Activated CD8-positive, alpha-beta memory T cell treated with anti-CD3 and anti-CD28 coated beads, Interleukin-2, amount 10 ng/mL, durations not matched to agents 7 days and 5 days (primary cell): ENCODE measurements at regions of chr1 and their contacts with region 1.

Region 1: DNA sequence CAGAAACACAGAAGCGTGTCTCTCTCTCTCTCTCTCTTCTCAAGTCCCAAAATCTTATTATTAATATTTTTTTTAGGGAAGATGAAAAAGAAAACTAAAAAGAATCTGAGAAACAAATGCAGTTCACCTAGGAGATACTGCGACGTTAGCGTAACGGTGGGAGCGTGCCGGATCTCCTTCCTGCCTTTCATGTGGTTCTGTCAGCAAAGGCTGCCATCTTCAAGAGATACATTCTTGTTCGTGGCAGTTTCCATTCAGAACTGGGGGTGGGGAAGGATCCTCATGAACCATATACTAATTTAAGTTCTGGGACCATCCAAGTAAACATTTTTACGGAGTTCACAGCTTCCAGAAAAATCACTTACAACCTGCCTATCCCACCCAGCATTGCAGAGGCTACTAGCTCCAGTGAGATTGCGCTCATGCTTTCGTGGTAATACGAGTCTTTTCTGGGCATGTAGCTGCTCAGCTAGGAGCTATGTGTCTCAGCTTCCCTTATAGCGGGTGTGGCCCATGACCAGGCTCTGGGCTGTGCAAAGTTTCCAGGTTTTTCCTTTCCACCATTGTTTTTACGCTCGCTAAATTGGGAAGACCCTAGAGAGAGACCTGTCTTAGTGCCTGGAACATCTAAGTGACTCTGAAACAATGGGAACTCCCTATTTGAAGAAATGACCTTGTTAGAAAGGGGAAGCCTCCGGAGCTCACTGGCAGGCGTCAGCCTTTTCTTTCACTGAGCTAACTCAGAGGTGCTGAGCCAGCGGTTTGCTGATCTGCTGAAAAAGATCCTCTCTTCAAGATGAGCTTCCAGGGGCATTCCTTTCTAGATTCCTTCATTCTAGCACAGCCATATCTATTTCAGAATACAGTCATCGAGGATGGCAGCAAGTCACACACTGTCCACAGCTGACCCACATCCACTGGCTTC is 17.3 kb downstream of the SLAMF1 start:
- DNase-seq: peak; percentile 83
- ATAC-seq: peak; percentile 42
- H3K4me3 Mint-ChIP-seq: peak overlapping the region; percentile 46
- H3K27ac Mint-ChIP-seq: peak overlapping the region; percentile 97
- H3K4me1 Mint-ChIP-seq: peaks cover 97% of the 10 kb centered on the region
- H3K27me3 Mint-ChIP-seq: no peaks in the 10 kb centered on the region

Region 2: DNA sequence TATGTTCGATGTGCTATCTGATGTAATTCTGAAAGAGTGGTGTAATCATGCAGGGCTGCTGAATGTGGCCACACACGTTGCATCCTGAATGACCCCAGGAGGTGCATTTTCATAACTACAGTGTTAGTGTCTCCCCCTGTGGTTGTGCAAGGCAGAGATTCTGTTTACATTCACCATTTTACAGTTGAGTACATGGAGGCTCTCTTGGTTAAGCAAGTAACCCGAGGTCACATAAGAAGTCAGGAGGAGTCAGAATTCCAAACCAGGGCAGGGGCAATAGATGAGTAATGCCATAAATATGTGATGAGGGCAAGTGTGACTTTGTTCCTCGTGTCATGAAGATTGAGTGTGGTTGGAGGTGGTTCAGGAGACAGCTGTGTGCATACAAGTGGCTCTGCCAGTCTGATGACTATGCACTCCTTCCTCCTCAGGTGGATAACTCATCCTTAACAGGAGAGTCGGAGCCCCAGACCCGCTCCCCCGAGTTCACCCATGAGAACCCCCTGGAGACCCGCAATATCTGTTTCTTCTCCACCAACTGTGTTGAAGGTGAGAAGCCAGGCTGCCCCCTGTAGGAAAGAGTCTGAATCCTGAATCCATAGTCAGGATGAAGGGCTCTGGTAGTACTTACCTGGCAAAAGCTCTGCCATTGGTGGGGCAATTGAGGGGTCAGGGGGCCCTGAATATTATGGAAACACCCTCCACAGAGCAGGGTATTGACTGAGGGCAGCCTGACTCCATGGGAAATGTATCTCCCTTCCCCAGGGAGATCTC is 504.7 kb before region 1 on chr1:
- CTCF ChIA-PET with region 1: no interaction called
- DNase-seq: no peak
- ATAC-seq: no peak
- H3K4me3 Mint-ChIP-seq: no peak overlapping the region
- H3K27ac Mint-ChIP-seq: no peak overlapping the region
- H3K4me1 Mint-ChIP-seq: no peaks in the 10 kb centered on the region
- H3K27me3 Mint-ChIP-seq: peaks cover 6% of the 10 kb centered on the region

Region 3: GRCh38 chr1:160590488-160590887 is 39.1 kb before region 1 on chr1:
- CTCF ChIA-PET with region 1: no interaction called
- DNase-seq: no peak
- ATAC-seq: no peak
- H3K4me3 Mint-ChIP-seq: no peak overlapping the region
- H3K27ac Mint-ChIP-seq: no peak overlapping the region
- H3K4me1 Mint-ChIP-seq: peaks cover 8% of the 10 kb centered on the region
- H3K27me3 Mint-ChIP-seq: no peaks in the 10 kb centered on the region

Region 4: DNA sequence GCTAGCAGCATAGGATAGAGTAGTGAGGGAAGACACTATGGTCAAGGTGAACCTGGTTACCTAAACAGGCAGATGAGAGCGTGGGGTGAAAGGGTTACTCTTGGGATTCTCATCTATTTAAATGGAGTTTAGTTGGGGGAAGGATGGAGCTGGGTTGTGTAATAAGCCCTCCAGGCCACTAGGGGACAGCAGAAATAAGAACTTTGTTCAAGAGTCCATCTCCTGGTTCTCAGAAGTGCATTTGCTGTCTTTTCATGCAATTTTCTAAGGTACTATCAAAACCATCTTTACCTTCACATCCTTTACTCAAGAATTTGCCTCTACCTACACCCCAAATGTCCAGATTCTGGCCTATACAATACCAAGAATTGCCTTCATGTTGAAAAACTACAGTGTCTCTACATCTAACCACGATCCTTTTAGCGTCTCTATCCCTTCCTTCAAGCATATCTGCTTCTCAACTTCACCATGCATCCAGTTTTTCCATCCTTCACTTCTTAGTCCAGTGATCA is 10.7 kb before region 1 on chr1:
- CTCF ChIA-PET with region 1: interaction called, 13 read pairs
- DNase-seq: peak; percentile 68
- ATAC-seq: no peak
- H3K4me3 Mint-ChIP-seq: no peak overlapping the region
- H3K27ac Mint-ChIP-seq: peak overlapping the region; percentile 66
- H3K4me1 Mint-ChIP-seq: peaks cover 71% of the 10 kb centered on the region
- H3K27me3 Mint-ChIP-seq: no peaks in the 10 kb centered on the region

Region 5: DNA sequence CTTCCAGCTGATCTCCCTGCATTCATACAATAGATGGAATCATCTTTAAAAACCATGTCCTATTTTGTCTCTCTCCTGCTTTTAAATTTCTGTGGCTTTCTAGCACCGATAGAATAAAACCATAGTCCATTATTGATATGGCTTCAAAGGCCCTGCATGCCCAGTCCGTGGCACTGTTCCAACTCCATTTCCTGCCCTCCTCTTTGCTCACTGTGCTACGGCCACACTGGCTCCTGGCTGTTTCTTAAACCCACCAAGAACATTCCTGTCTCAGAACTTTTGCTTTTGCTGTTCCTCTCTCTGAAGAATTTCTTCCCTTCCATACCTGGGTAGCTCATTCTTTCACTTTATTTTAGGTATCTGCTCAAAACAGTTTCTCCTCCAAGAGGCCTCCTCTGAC is 10.1 kb after region 1 on chr1:
- CTCF ChIA-PET with region 1: interaction called, 12 read pairs
- DNase-seq: no peak
- ATAC-seq: no peak
- H3K4me3 Mint-ChIP-seq: peak overlapping the region; percentile 67
- H3K27ac Mint-ChIP-seq: peak overlapping the region; percentile 95
- H3K4me1 Mint-ChIP-seq: peaks cover 89% of the 10 kb centered on the region
- H3K27me3 Mint-ChIP-seq: no peaks in the 10 kb centered on the region

Region 6: GRCh38 chr1:160646711-160647328 is 17.3 kb after region 1 on chr1 and contains the start of gene SLAMF1:
- CTCF ChIA-PET with region 1: interaction called, 10 read pairs
- DNase-seq: peak; percentile 60
- ATAC-seq: peak; percentile 63
- H3K4me3 Mint-ChIP-seq: peak within 1 kb of the TSS; percentile 97
- H3K27ac Mint-ChIP-seq: peak within 1 kb of the TSS; percentile 92
- H3K4me1 Mint-ChIP-seq: peaks cover 61% of the 10 kb centered on the region
- H3K27me3 Mint-ChIP-seq: no peaks in the 10 kb centered on the region
- total RNA-seq, gene SLAMF1: 59.3 to 105 TPM